HepG2 (cell line): ENCODE measurements at regions of chr3 and their contacts with region 1.

Region 1: GRCh38 chr3:158539414-158540014 is 31.5 kb upstream of the MLF1 start:
- DNase-seq: peak; percentile 46
- ATAC-seq: peak; percentile 66
- H3K4me3 ChIP-seq: no peak overlapping the region
- H3K27ac ChIP-seq: no peak overlapping the region
- H3K4me1 ChIP-seq: no peaks in the 10 kb centered on the region
- H3K27me3 ChIP-seq: no peaks in the 10 kb centered on the region
- CTCF ChIP-seq: peak; percentile 62
- EP300 ChIP-seq: no peak
- POLR2A ChIP-seq: no peak
- RAD21 ChIP-seq: peak; percentile 21; the same call in 1 of the 2 replicates

Region 2: DNA sequence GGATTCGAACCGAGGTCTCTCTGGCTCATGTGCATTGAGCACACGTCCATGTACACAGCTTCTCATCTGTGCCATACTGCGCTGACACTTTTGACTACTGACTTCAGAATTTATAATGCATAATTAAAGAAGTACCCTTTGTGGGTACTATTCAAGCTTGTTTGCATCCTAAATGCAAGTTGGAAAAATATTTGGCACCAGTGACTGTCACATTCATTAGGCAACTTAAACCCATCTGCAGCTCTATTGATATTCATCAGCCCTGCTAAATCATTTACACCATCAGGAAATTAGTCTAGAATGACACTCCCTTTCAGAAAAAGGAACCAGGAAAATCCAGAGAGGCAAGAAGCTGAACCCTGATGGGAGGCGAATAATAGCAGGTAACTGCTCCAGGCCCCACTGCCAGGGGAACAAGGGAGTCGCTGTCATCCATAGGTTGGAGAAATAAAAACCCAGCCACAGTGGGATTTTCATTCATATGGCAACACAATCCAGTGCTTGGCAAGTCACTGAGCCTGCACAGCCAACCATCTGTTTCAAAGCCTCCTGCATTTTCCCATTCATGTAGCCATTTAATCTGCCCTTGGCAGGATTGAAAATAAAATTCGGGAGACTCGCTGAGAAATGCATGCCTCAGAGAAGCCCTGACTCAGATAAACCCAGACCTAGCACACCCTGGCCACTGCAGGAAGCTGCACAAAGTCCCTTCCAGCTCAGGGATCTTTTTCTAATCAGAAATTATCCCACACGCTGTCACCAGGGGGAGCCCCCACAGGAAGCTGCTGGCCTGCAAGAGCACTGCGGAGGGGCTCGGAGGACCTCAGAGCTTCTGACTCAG is 933.3 kb before region 1 on chr3:
- CTCF ChIA-PET with region 1: no interaction called
- POLR2A ChIA-PET with region 1: no interaction called
- in situ Hi-C with region 1: loop called (anchors 25 kb)
- intact Hi-C with region 1: no loop called
- DNase-seq: peak; percentile 47
- ATAC-seq: peak; percentile 99
- H3K4me3 ChIP-seq: no peak overlapping the region
- H3K27ac ChIP-seq: no peak overlapping the region
- H3K4me1 ChIP-seq: no peaks in the 10 kb centered on the region
- H3K27me3 ChIP-seq: no peaks in the 10 kb centered on the region
- CTCF ChIP-seq: peak; percentile 81
- EP300 ChIP-seq: no peak
- POLR2A ChIP-seq: no peak
- RAD21 ChIP-seq: no peak

Region 3: DNA sequence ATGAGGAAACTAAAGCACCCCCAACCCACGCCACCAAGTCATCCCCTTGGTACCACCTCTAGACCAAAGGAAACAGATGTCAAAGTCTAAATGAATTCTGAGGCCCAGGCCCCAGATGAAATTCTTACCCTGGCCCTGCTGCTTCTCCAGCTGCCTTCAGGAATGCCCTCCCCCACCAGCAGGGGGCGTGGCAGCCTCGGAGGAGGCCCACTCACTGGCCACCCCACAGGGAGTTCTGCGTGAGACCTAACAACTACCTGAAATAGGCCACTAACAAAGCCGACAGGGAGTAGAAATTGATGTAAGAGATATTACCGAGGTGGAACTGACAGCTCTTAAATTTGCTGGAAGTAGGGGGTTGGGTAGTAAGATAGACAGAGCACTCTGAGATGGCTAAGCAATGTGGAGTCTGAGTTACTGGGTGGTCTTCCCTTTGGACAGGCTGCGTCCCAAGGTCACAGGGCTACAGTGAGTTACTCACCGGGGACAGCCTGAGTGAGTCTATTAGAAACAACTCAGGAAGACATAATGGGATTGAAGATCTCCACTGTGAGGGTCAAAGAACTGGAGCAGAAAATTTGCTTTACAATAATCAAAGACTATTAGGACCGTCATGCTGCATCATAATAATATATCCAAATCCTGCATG is 674.0 kb before region 1 on chr3:
- CTCF ChIA-PET with region 1: no interaction called
- POLR2A ChIA-PET with region 1: no interaction called
- in situ Hi-C with region 1: loop called (anchors 10 kb)
- intact Hi-C with region 1: no loop called
- DNase-seq: peak; percentile 2
- ATAC-seq: peak; percentile 97
- H3K4me3 ChIP-seq: no peak overlapping the region
- H3K27ac ChIP-seq: no peak overlapping the region
- H3K4me1 ChIP-seq: no peaks in the 10 kb centered on the region
- H3K27me3 ChIP-seq: no peaks in the 10 kb centered on the region; a peak in 1 of 5 replicates
- CTCF ChIP-seq: peak; percentile 85
- EP300 ChIP-seq: no peak
- POLR2A ChIP-seq: no peak
- RAD21 ChIP-seq: peak; percentile 63

Region 4: DNA sequence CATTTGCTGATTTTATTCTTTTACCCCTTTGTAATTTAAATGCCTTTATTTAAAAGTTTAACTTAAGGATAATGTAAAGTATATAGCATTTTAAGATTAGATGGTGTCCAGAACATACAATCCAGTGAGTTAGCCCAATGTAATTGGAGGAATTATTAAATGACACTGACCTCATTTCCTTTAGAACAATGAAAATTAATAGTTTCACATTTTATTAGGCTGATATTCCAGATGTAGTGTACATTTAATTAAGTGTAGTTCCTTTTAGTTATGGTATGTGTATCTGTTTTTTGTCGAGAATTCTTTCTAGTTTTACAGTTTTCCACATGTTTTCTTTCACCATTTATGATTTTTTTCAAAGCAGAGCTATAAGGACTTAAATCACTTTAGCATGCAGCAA is 353.8 kb before region 1 on chr3:
- CTCF ChIA-PET with region 1: no interaction called
- POLR2A ChIA-PET with region 1: no interaction called
- in situ Hi-C with region 1: no loop called
- intact Hi-C with region 1: no loop called
- DNase-seq: no peak
- ATAC-seq: no peak
- H3K4me3 ChIP-seq: no peak overlapping the region
- H3K27ac ChIP-seq: no peak overlapping the region
- H3K4me1 ChIP-seq: no peaks in the 10 kb centered on the region
- H3K27me3 ChIP-seq: no peaks in the 10 kb centered on the region; a peak in 1 of 5 replicates
- CTCF ChIP-seq: no peak
- EP300 ChIP-seq: no peak
- POLR2A ChIP-seq: no peak
- RAD21 ChIP-seq: no peak

Region 5: GRCh38 chr3:158573714-158574113 is 34.2 kb after region 1 on chr3:
- CTCF ChIA-PET with region 1: no interaction called
- POLR2A ChIA-PET with region 1: no interaction called
- in situ Hi-C with region 1: no loop called
- intact Hi-C with region 1: no loop called
- DNase-seq: peak; percentile 3
- ATAC-seq: no peak
- H3K4me3 ChIP-seq: no peak overlapping the region
- H3K27ac ChIP-seq: no peak overlapping the region
- H3K4me1 ChIP-seq: 0 out of 2 replicates have a peak, but pooled peaks cover 9% of the 10 kb centered on the region
- H3K27me3 ChIP-seq: 0 out of 5 replicates have a peak, but pooled peaks cover 0 to 3% of the 10 kb centered on the region in 2 experiments
- CTCF ChIP-seq: peak; percentile 15; the same call in 1 of the 2 replicates
- EP300 ChIP-seq: no peak
- POLR2A ChIP-seq: no peak
- RAD21 ChIP-seq: no peak